A673 (cell line): ENCODE measurements at regions of chr9 and their contacts with region 1.

Region 1: DNA sequence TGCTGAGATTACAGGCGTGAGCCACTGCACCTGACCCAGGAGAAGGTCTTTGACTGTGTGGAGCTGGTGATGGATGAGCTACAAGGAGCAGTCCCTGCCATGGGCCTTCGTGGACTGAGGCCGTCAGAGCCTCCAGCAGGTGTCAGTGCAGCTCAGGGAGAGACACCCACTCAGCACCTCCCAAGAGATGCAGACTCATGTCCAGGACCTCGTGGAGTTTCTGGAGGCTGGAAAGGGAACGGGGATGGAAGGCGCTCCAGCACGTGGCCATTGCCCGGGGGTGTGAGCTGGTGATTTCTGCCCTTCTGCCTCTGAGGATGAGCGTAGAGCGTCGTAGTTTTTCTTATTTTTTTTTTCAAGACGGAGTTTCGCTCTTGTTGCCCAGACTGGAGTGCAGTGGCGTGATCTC is 9.5 kb downstream of the TOR4A start:
- DNase-seq: peak; percentile 85
- H3K4me3 ChIP-seq: no peak overlapping the region
- H3K27ac ChIP-seq: no peak overlapping the region
- H3K4me1 ChIP-seq: no peaks in the 10 kb centered on the region
- H3K27me3 ChIP-seq: no peaks in the 10 kb centered on the region
- CTCF ChIP-seq: peak; percentile 78

Region 2: DNA sequence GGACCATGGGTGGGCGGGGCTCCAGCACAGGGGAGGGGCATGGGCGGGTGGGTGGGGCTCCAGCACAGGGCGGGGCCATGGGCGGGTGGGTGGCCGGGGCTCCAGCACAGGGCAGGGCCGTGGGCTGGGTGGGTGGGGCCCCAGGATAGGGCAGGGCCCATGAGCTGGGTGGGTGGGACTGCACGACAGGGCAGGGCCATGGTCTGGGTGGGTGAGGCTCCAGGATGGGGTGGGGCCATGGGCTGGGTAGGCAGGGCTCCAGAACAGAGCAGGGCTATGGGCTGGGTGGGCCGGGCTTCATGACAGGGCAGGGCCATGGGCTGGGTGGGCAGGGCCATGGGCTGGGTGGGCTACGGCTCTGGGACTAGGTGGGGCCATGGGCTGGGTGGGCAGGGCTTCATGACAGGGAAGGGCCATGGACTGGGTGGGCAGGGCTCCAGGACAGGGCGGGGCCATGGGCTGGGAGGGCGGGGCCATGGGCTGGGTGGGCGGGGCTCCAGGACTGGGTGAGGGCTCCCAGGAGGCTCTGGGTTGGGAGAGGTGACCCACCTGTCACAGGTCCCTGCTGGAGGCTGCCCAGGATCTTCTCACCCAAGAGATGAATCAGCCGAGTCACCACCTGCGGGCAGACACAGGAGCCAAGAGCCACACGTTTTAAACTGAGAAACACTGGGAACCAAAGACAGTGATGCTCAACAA is 205.6 kb after region 1 on chr9:
- CTCF ChIA-PET with region 1: no interaction called
- POLR2A ChIA-PET with region 1: no interaction called
- intact Hi-C with region 1: no loop called
- DNase-seq: peak; percentile 63
- H3K4me3 ChIP-seq: no peak overlapping the region
- H3K27ac ChIP-seq: no peak overlapping the region
- H3K4me1 ChIP-seq: no peaks in the 10 kb centered on the region
- H3K27me3 ChIP-seq: no peaks in the 10 kb centered on the region
- CTCF ChIP-seq: no peak

Region 3: DNA sequence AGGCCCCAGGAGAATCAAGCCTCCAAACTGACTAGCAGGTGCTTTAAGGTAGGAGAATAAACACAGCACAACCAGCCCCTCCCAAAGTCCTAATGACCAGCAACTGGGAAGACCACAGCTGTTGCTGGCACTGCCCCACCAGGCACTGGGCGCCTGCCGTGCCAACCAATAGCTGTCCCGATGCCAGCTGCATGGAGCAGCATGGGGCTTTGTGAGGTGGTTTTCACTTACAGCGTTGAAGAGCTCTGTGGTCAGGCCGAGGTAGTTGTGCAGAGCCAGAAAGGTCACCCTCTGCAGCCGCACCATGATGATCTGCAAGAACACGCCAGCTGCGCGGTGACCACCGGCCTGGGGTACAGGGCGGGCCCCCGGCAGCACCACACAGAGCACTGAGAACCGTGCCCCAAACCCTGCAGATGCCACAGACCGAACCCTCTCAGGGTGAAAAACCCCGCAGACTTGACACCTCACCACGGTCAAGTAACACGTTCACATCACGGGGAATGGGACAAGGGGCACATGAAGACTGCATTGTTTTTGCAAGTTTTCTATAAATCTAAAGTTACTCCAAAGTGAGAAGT is 234.5 kb after region 1 on chr9:
- CTCF ChIA-PET with region 1: interaction called, 4 read pairs
- POLR2A ChIA-PET with region 1: no interaction called
- intact Hi-C with region 1: loop called (anchors 2 kb)
- DNase-seq: no peak
- H3K4me3 ChIP-seq: no peak overlapping the region
- H3K27ac ChIP-seq: no peak overlapping the region
- H3K4me1 ChIP-seq: no peaks in the 10 kb centered on the region
- H3K27me3 ChIP-seq: no peaks in the 10 kb centered on the region
- CTCF ChIP-seq: no peak

Region 4: GRCh38 chr9:137534256-137535117 is 247.5 kb after region 1 on chr9:
- CTCF ChIA-PET with region 1: no interaction called
- POLR2A ChIA-PET with region 1: interaction called, 12 read pairs
- intact Hi-C with region 1: no loop called
- DNase-seq: peak; percentile 78
- H3K4me3 ChIP-seq: no peak overlapping the region
- H3K27ac ChIP-seq: peak overlapping the region; percentile 50
- H3K4me1 ChIP-seq: no peaks in the 10 kb centered on the region
- H3K27me3 ChIP-seq: no peaks in the 10 kb centered on the region
- CTCF ChIP-seq: peak; percentile 79